ENCODE measurements at regions of chr7 and their contacts with region 1.

Region 1: GRCh38 chr7:954330-955238 is at the start of gene ADAP1:
- DNase-seq: peak; percentile 76
- ATAC-seq: peak; percentile 71
- H3K4me3 ChIP-seq: peak within 1 kb of the TSS in 3 of 5 experiments; percentile 30 to 61 (median 45)
- H3K4me3 Mint-ChIP-seq: peak within 1 kb of the TSS; percentile 76
- H3K27ac ChIP-seq: no peak within 1 kb of the TSS
- H3K27ac Mint-ChIP-seq: peak within 1 kb of the TSS; percentile 32
- H3K4me1 ChIP-seq: peaks cover 7 to 38% of the 10 kb centered on the region in 2 donors
- H3K4me1 Mint-ChIP-seq: peaks cover 19% of the 10 kb centered on the region
- H3K27me3 ChIP-seq: peaks cover 0 to 21% (median 5%) of the 10 kb centered on the region in 4 experiments
- H3K27me3 Mint-ChIP-seq: peaks cover 3% of the 10 kb centered on the region
- CTCF ChIP-seq: no peak
- total RNA-seq, gene ADAP1: 12.9 and 15.6 TPM in 2 replicates

Region 2: GRCh38 chr7:917255-918117 is 37.1 kb before region 1 on chr7:
- CTCF ChIA-PET with region 1: no interaction called
- POLR2A ChIA-PET with region 1: no interaction called
- intact Hi-C with region 1: no loop called
- DNase-seq: no peak
- ATAC-seq: no peak
- H3K4me3 ChIP-seq: no peak overlapping the region
- H3K4me3 Mint-ChIP-seq: no peak overlapping the region
- H3K27ac ChIP-seq: no peak overlapping the region
- H3K27ac Mint-ChIP-seq: no peak overlapping the region
- H3K4me1 ChIP-seq: peaks cover 9 to 18% of the 10 kb centered on the region in 2 donors
- H3K4me1 Mint-ChIP-seq: peaks cover 15% of the 10 kb centered on the region
- H3K27me3 ChIP-seq: no peaks in the 10 kb centered on the region
- H3K27me3 Mint-ChIP-seq: no peaks in the 10 kb centered on the region
- CTCF ChIP-seq: no peak

Region 3: DNA sequence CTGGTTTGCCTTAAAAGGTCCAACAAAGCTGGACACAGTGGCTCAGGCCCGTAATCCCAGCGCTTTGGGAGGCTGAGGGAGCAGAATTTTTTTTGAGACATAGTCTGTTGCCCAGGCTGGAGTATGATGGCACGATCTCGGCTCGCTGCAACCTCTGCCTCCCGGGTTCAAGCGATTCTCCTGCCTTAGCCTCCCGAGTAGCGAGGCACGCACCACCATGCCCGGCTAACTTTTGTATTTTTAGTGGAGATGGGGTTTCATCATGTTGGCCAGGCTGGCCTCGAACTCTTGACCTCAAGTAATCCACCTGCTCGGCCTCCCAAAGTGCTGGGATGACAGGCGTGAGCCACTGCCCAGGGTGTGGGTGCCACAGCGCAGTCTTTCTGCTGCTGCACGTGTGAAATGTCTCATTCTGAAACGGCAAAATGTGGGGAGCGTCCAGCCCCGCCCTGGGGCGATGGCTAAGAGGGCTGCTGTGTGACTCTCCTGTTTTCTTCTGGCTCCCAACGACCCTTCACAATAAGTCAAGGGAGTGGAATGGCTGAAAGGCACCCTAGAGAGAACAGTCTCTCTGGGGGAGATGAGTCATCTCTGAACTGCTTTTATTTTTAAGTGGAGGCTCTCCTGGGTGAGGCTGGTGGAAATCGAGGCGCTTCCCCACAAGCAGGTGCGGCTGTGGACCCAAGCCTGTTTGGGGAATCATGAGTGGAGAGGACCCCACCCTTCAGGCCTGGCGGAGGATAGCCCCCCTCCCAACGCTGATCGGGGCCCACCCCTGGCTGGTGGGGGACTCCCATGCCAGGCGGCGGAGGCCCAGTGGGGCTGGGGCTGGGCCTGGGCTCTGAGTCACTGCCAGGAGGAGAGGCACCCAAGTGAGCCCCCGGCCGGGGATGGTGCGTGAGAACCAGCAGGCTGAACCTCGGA is 18.2 kb before region 1 on chr7:
- CTCF ChIA-PET with region 1: interaction called, 4 read pairs
- POLR2A ChIA-PET with region 1: no interaction called
- intact Hi-C with region 1: loop called (anchors 1 kb)
- DNase-seq: no peak
- ATAC-seq: peak; percentile 66
- H3K4me3 ChIP-seq: no peak overlapping the region
- H3K4me3 Mint-ChIP-seq: peak overlapping the region; percentile 13
- H3K27ac ChIP-seq: no peak overlapping the region
- H3K27ac Mint-ChIP-seq: peak overlapping the region; percentile 32
- H3K4me1 ChIP-seq: peaks cover 0 to 7% of the 10 kb centered on the region in 2 donors
- H3K4me1 Mint-ChIP-seq: peaks cover 13% of the 10 kb centered on the region
- H3K27me3 ChIP-seq: no peaks in the 10 kb centered on the region
- H3K27me3 Mint-ChIP-seq: peaks cover 8% of the 10 kb centered on the region
- CTCF ChIP-seq: no peak